Activated naive CD4-positive, alpha-beta T cell treated with anti-CD3 and anti-CD28 coated beads for 36 hours (primary cell): ENCODE measurements at regions of chr7 and their contacts with region 1.

Region 1: DNA sequence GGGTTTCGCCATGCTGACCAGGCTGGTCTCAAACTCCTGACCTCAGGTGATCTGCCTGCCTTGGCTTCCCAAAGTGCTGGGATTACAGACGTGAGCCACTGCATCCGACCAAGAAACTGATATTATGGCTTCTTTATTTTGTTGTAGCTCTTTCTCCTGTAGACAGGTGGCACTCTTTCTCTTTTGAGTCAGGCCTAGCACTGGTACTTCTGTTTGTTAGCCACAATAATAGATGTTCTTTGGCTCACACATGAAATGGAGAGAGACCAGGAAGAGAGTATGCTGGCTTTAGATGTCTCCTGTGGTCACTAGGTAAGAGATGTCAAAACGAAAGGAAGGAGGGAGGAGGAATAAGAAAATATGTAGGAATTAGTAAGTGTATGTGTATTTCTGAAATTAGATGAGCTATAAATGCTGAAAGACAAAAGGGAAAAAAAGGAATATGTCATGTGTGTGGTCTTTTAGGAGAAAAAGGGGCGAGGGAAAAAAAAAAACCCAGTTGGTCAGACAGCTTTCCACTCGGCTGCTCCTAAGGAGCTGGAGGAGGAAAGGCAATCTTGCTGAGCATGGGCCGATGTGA is 78.7 kb downstream of the CLEC2L start:
- DNase-seq: no peak
- H3K4me3 Mint-ChIP-seq: no peak overlapping the region
- H3K27ac Mint-ChIP-seq: no peak overlapping the region
- H3K4me1 Mint-ChIP-seq: no peaks in the 10 kb centered on the region
- H3K27me3 Mint-ChIP-seq: no peaks in the 10 kb centered on the region

Region 2: GRCh38 chr7:139591550-139592195 is 10.6 kb before region 1 on chr7:
- CTCF ChIA-PET with region 1: interaction called, 11 read pairs
- intact Hi-C with region 1: no loop called
- DNase-seq: no peak
- H3K4me3 Mint-ChIP-seq: no peak overlapping the region
- H3K27ac Mint-ChIP-seq: no peak overlapping the region
- H3K4me1 Mint-ChIP-seq: no peaks in the 10 kb centered on the region
- H3K27me3 Mint-ChIP-seq: no peaks in the 10 kb centered on the region

Region 3: GRCh38 chr7:140304191-140304799 is 702.1 kb after region 1 on chr7:
- CTCF ChIA-PET with region 1: no interaction called
- intact Hi-C with region 1: loop called (anchors 10 kb)
- DNase-seq: peak; percentile 55
- H3K4me3 Mint-ChIP-seq: no peak overlapping the region
- H3K27ac Mint-ChIP-seq: peak overlapping the region; percentile 90
- H3K4me1 Mint-ChIP-seq: peaks cover 7% of the 10 kb centered on the region
- H3K27me3 Mint-ChIP-seq: no peaks in the 10 kb centered on the region